Activated naive CD8-positive, alpha-beta T cell treated with anti-CD3 and anti-CD28 coated beads, Interleukin-2, amount 10 ng/mL, durations not matched to agents 7 days and 5 days (primary cell): ENCODE measurements at regions of chr6 and their contacts with region 1.

Region 1: DNA sequence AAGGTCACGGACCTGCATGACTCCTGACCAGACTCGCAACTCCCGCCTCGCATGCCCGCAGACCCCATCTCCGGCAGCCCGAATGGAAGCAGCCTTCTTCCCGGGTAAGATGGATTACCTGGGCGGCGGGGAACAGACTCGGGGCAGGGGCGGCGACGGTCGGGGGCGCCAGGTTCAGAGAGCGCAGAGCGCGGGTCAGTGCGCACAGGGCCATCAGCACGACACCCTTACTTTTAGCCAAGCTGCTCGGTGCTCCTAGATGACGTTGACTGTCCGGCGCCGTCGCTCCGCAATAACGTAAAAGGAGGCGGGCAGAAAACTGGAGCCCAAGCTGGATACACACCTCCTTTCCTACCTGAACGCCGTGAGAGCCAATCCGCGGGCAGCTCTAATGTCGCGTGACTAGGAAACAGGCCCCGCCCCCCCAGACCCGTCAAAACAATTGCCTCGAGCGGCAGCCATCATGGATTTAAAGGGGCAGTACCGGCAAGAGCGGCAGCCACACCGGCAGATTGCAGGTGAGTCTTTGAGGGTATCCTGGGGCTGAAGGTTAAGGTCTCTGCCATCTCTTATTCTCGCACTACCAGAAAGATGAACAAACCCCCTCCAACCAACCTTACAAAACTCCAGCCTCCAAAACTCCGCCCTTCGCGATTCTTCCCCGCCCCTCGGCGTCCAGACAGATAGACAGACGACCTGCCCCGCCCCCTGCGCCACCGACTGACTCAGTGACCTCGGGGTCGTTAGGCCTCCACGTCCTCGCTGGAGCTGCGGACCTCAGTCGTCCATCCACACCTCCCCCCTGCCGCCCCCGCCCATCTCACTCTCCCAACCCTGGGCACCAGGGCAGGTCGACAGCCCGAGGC is at the starts of genes KLC4 and MRPL2:
- DNase-seq: peak; percentile 91
- ATAC-seq: peak; percentile 95
- H3K4me3 Mint-ChIP-seq: peak within 1 kb of the TSS; percentile 87
- H3K27ac Mint-ChIP-seq: peak within 1 kb of the TSS; percentile 96
- H3K4me1 Mint-ChIP-seq: peaks cover 21% of the 10 kb centered on the region
- H3K27me3 Mint-ChIP-seq: no peaks in the 10 kb centered on the region
- total RNA-seq, gene KLC4: 25.2 to 33.8 TPM
- total RNA-seq, gene MRPL2: 50.1 to 65.2 TPM

Region 2: DNA sequence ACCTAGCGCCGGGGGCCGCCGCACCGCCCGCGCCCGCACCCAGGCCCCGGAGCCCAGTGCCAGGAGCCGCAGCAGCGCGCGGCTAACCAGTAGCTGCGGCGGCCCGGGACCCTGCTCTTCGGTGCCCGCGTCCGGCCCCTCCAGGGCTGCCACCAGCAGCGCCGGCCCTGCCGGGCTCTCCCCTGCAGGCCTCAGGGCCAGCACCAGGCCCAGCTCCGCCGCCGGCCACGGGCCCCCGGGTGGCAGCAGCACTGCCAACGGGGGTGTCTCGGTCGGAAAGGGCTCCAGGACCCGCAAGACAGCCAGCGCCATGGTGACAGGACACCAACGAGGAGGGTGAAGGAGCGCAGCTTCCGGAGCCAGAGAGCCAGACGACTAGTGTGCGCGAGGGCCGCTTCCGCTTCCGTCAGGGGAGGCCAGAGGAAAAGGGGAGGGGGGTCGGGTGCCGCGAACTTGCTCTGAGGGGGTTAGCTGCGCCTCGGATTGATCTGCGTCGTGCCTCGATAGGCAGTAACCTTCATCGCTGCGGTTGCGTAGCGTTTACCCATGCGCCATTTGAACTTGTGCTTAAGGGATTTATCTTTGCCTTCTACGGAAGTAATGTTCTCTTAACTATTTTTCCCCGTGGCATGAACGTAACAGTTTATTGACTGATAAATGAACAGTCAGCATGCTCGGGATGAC is 80.4 kb before region 1 on chr6 and contains the start of gene PEX6:
- POLR2A ChIA-PET with region 1: interaction called, 13 read pairs
- DNase-seq: peak; percentile 93
- ATAC-seq: peak; percentile 94
- H3K4me3 Mint-ChIP-seq: peak within 1 kb of the TSS; percentile 89
- H3K27ac Mint-ChIP-seq: peak within 1 kb of the TSS; percentile 98
- H3K4me1 Mint-ChIP-seq: peaks cover 34% of the 10 kb centered on the region
- H3K27me3 Mint-ChIP-seq: no peaks in the 10 kb centered on the region
- total RNA-seq, gene PEX6: 27.1 to 27.6 TPM

Region 3: GRCh38 chr6:43013843-43014433 is 45.5 kb before region 1 on chr6 and contains the starts of genes KLHDC3 and MEA1:
- POLR2A ChIA-PET with region 1: interaction called, 17 read pairs
- DNase-seq: peak; percentile 94
- ATAC-seq: peak; percentile 95
- H3K4me3 Mint-ChIP-seq: peak within 1 kb of the TSS; percentile 93
- H3K27ac Mint-ChIP-seq: peak within 1 kb of the TSS; percentile 92
- H3K4me1 Mint-ChIP-seq: peaks cover 41% of the 10 kb centered on the region
- H3K27me3 Mint-ChIP-seq: no peaks in the 10 kb centered on the region
- total RNA-seq, gene KLHDC3: 69.4 to 69.9 TPM
- total RNA-seq, gene MEA1: 61.2 to 70.1 TPM

Region 4: GRCh38 chr6:43021270-43022047 is 37.9 kb before region 1 on chr6 and contains the start of gene RRP36:
- POLR2A ChIA-PET with region 1: interaction called, 14 read pairs
- DNase-seq: peak; percentile 72
- ATAC-seq: peak; percentile 75
- H3K4me3 Mint-ChIP-seq: peak within 1 kb of the TSS; percentile 98
- H3K27ac Mint-ChIP-seq: peak within 1 kb of the TSS; percentile 93
- H3K4me1 Mint-ChIP-seq: peaks cover 19% of the 10 kb centered on the region
- H3K27me3 Mint-ChIP-seq: no peaks in the 10 kb centered on the region
- total RNA-seq, gene RRP36: 63.8 to 65.6 TPM